ENCODE measurements at regions of chr7 and their contacts with region 1.

Region 1: GRCh38 chr7:77649716-77650349 is 46.4 kb upstream of the RSBN1L start:
- DNase-seq: no peak
- H3K4me3 ChIP-seq: no peak overlapping the region
- CTCF ChIP-seq: no peak

Region 2: DNA sequence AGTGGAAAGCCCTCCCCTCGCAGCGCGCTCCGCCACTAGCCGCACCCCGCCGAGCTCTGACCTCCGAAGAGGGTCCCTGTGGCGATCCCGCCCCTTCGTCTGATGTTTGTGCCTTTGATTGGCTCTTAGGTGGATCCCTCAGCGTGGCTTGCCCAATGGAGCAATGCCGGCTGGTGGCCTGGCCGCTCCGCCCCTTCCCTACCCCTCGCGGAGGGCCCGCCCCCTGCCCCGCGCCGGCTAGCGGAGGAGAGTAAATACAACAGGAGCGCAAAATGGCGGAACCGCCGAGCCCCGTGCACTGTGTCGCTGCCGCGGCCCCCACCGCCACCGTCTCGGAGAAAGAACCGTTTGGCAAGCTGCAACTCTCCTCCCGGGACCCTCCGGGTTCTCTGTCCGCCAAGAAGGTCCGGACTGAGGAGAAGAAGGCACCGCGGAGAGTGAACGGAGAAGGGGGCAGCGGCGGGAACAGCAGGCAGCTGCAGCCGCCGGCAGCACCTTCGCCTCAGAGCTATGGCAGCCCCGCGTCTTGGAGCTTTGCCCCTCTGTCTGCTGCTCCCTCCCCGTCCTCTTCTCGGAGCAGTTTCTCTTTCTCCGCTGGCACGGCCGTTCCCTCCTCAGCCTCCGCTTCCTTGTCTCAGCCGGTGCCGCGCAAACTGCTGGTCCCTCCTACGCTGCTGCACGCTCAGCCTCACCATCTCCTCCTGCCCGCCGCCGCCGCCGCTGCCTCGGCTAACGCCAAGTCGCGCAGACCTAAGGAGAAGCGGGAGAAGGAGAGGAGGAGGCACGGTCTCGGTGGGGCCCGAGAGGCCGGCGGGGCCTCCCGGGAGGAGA is 46.6 kb after region 1 on chr7 and contains the start of gene RSBN1L:
- in situ Hi-C with region 1: no loop called
- DNase-seq: peak; percentile 94
- H3K4me3 ChIP-seq: peak within 1 kb of the TSS; percentile 68
- CTCF ChIP-seq: peak; percentile 42

Region 3: DNA sequence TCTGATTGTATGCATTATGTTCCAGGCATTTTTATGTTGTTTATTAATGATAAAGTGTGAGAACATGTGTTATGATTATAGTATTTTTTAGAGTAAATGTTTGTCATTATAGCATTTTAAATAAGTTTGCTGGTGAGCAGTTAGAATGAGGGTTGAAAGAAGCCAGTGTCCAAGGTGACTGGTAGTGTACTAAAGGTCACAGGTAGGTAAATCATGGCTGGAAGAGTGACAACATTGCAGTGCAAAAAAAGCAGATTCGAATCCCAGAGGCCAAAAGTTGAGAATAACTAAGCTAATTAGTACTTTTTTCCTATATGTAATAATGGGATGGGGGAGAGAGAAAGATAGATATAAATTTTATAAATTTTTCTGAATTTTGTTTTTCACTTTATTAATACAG is 90.4 kb after region 1 on chr7:
- in situ Hi-C with region 1: loop called (anchors 5 kb)
- DNase-seq: no peak
- H3K4me3 ChIP-seq: no peak overlapping the region
- CTCF ChIP-seq: no peak